Left lung (tissue), 14 donors: ENCODE measurements at regions of chr10 and their contacts with region 1.

Region 1: GRCh38 chr10:104353325-104354048 is at the start of gene CFAP58:
- DNase-seq: peak; percentile 85 to 98 (median 95)
- ATAC-seq: peak; percentile 86
- H3K4me3 ChIP-seq: peak within 1 kb of the TSS; percentile 27 to 47
- H3K27ac ChIP-seq: peak within 1 kb of the TSS in 1 of 2 donors; percentile 96
- H3K4me1 ChIP-seq: peaks cover 15 to 66% of the 10 kb centered on the region in 2 donors
- H3K27me3 ChIP-seq: no peaks in the 10 kb centered on the region
- CTCF ChIP-seq: peak; percentile 52 to 76
- polyA plus RNA-seq, gene CFAP58: 1.2 to 2.2 (median 1.8) TPM

Region 2: DNA sequence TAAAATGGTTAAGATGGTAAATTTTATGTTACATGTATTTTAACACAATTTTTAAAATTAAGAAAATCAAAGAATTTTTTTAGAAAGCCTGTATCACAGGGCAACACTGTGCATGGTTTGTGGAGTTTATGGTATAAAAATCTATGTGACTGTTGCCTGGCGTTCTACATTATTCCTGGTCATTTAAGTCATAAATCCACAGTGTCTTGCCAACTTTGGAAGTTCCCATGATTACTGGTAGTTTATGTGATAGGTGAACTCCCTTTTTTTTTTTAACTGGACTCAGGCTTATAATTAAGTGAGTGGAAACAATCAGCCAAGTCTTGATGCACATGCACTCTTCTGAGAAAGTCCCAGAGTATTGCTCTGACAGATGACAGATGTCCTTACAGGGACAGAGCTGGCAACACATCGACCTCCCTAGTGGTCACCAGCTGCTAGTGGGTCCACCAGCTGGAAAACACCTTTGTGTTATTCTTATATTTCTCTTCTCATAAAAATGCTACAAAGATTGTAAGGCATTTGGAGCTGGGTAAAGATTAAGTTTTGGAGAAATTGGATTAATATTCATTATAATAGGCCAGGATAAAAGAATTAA is 426.7 kb before region 1 on chr10:
- intact Hi-C with region 1: no loop called
- DNase-seq: no peak
- ATAC-seq: no peak
- H3K4me3 ChIP-seq: no peak overlapping the region
- H3K27ac ChIP-seq: no peak overlapping the region
- H3K4me1 ChIP-seq: peaks cover 0 to 3% of the 10 kb centered on the region in 2 donors
- H3K27me3 ChIP-seq: no peaks in the 10 kb centered on the region
- CTCF ChIP-seq: no peak

Region 3: DNA sequence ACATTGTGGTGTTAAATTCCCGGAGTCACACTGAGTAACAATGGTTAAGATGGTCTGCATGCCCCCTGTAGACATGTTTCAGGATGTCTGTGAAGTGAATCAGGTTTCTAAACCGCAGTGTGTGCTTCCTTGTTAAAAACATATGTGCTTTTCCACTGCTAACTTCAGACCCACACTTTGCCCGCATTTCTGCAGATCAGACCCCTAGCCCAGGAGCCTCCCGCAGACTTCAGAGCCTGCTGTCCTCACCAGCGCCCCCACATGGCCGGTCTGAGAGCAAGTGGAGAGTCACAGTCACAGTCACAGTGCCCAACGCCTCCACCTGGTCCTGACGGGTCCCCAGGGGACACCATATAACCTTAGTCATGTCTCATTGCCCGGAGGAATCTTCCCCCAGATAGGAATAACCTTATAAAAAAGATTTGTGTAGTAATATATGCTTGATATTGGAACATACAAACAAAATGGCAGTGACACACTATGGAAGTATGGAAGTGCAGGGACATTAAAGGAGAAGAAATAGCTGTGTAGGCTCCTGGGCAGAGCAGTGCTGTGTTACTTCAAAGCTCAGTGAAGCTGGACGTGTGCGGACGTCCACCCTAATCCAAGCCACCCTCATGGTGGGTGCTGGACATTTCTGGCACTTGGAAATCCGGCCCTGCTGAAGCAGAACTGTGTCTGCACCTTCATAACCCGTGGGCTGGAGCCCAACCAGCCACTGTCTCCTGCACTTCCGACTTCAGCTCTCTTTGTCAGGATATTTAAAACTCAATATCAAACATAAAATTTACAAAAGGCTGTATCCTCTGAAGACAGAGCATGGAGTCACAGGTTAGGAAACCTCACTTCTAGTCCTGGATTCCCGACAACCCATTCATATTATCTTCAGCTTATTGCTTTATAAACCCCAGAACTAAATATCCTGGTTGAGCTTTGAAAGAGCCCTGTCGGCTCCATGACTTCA is 55.5 kb before region 1 on chr10:
- intact Hi-C with region 1: loop called in 1 of 2 experiments (anchors 5 kb)
- DNase-seq: no peak
- ATAC-seq: no peak
- H3K4me3 ChIP-seq: no peak overlapping the region
- H3K27ac ChIP-seq: peak overlapping the region in 1 of 2 donors; percentile 67
- H3K4me1 ChIP-seq: peaks cover 6 to 22% of the 10 kb centered on the region in 2 donors
- H3K27me3 ChIP-seq: no peaks in the 10 kb centered on the region
- CTCF ChIP-seq: peak in 1 of 2 donors; percentile 14

Region 4: DNA sequence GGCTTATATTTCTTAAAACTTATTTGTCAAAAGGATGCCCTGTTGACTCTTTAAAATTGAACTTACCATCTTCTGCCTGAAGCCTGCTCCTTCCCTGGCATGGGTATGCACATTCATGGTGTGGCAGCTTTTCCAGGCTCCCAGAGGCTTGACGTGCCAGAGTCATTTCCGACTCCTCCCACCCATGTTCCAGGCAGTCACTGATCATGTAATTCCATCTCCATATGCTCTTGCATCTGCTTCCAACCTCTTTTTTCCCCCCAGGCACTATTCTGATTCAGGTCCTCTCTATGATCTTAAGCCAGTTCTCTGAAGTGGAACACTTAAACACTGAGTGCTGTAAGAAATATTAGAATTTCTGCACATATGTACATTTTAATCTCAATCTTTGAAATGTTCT is 82.3 kb after region 1 on chr10:
- intact Hi-C with region 1: no loop called
- DNase-seq: no peak
- ATAC-seq: no peak
- H3K4me3 ChIP-seq: no peak overlapping the region
- H3K27ac ChIP-seq: no peak overlapping the region
- H3K4me1 ChIP-seq: no peaks in the 10 kb centered on the region
- H3K27me3 ChIP-seq: no peaks in the 10 kb centered on the region
- CTCF ChIP-seq: no peak